ENCODE measurements at regions of chr1 and their contacts with region 1.

Region 1: DNA sequence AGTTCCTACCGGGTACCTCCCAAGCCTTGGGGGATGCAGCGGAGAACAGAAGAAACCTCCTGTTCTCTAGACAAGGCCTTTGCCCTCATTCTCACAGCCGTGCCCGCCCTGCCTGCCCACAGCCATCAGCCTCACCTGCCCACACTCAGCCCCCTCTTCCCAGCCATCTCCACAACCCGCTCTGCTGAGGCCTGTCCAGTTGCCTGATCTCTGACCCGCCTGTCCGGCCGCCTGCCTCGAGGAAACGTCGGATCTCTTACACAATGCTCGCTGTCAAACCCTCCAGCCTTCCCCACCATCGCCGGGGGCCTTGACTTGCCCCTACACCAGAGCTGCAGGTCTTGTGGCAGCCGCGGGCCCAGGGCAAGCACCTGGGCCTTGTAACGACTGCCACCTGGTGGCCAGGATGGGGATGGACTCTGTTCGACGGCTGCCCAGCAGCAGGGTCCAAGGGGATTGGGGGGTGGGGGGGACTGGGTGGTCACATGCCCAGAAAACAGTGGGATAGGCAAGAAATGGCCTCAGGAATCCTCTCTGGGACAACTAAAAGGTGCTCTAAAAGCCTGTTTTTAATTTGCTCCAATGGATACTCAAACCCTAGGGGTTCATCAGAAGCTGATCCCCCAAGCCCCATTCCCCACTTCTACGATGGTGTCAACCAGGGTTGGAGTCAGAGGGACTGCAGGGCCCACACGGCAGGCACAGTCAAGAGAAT is 31.0 kb downstream of the SLC45A1 start:
- DNase-seq: peak; percentile 63 to 77 (median 68)
- ATAC-seq: peak; percentile 69 to 78 (median 74)
- H3K4me3 ChIP-seq: no peak overlapping the region
- H3K27ac ChIP-seq: no peak overlapping the region
- H3K4me1 ChIP-seq: no peaks in the 10 kb centered on the region
- H3K27me3 ChIP-seq: no peaks in the 10 kb centered on the region
- CTCF ChIP-seq: peak; percentile 74 to 78 (median 75)
- POLR2A ChIP-seq: no peak

Region 2: DNA sequence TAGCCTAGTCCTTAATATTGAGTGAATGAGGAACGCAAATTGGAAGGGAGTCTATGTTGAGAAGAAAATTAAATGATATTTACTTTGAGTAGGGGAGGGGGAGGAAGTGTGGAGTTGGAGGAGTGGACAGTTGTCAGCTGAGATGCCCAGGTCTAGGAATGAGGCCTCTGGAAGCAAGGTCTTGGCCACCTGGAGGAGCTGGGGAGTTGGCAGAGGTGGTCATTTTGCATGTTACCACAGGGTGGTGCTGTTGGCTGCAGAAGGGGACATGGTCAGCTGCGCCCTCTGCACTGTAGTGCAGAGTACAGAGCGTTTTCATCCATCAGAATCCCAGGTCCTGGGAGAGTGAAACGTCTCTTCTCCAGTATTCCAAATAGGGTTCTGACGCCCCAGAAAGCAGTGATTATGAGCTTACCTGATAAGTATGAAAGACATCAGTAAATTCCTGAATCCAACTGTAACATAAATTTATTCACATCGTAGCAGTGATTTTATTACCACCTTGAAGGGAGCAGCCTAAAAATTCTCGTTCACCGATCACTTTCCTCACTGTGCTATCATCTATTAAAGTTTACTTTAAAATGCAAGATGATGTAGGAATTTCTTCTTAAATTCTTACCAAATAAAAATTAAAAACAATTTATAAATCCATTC is 373.6 kb before region 1 on chr1:
- intact Hi-C with region 1: loop called (anchors 5 to 10 kb)
- DNase-seq: peak; percentile 68 to 80 (median 76)
- ATAC-seq: peak; percentile 99 to 100 (median 100)
- H3K4me3 ChIP-seq: no peak overlapping the region
- H3K27ac ChIP-seq: no peak overlapping the region
- H3K4me1 ChIP-seq: peaks cover 0 to 14% (median 1%) of the 10 kb centered on the region in 4 donors
- H3K27me3 ChIP-seq: no peaks in the 10 kb centered on the region
- CTCF ChIP-seq: peak; percentile 87 to 93 (median 90)
- POLR2A ChIP-seq: no peak

Region 3: GRCh38 chr1:7983086-7983778 is 365.7 kb before region 1 on chr1:
- intact Hi-C with region 1: loop called (anchors 5 to 10 kb)
- DNase-seq: peak; percentile 39 to 71 (median 61)
- ATAC-seq: peak; percentile 57 to 81 (median 74)
- H3K4me3 ChIP-seq: no peak overlapping the region
- H3K27ac ChIP-seq: peak overlapping the region in 1 of 3 donors; percentile 18
- H3K4me1 ChIP-seq: peaks cover 0 to 27% (median 2%) of the 10 kb centered on the region in 4 donors
- H3K27me3 ChIP-seq: no peaks in the 10 kb centered on the region
- CTCF ChIP-seq: no peak
- POLR2A ChIP-seq: no peak

Region 4: GRCh38 chr1:8077120-8077573 is 271.8 kb before region 1 on chr1:
- intact Hi-C with region 1: no loop called
- DNase-seq: peak in 1 of 3 donors; percentile 33
- ATAC-seq: peak; percentile 66 to 92 (median 72)
- H3K4me3 ChIP-seq: no peak overlapping the region
- H3K27ac ChIP-seq: no peak overlapping the region
- H3K4me1 ChIP-seq: peaks cover 0 to 3% (median 0%) of the 10 kb centered on the region in 4 donors
- H3K27me3 ChIP-seq: no peaks in the 10 kb centered on the region
- CTCF ChIP-seq: no peak
- POLR2A ChIP-seq: no peak

Region 5: DNA sequence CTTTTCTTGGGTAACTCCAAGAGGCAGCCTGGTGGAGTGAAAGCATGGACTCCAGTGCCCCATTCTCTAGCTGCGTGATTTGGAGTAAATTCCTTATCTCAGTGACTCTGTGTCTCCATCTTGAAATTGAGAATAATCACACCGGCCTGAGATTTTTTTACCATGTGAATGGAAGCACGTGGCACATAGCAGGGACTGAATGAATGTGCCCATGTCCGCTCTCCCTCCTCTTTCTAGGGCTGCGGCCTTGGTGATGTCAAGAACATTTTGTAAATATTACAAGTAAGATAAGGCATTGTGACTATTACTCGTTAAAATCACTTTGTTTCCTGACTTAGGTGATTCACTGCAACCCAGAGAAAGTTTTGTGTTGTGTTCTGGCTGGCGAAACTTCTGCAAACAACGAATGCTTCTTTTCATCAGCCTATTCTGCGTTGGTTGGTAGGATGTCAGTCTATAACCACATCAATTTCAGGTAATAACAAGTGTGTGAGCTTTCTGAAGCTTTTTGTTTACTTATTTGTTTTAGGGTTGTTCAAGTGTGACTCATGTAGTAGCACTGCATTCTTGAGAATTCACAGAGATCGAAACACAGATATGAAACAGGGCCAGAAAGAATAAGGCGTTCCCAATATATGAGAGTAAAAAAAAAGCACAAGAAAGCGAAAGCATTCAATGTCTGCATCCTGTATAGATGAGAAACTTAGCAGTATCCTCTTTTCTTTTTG is 166.7 kb before region 1 on chr1:
- intact Hi-C with region 1: no loop called
- DNase-seq: no peak
- ATAC-seq: peak; percentile 45 to 49 (median 48)
- H3K4me3 ChIP-seq: no peak overlapping the region
- H3K27ac ChIP-seq: no peak overlapping the region
- H3K4me1 ChIP-seq: peaks cover 0 to 3% (median 0%) of the 10 kb centered on the region in 4 donors
- H3K27me3 ChIP-seq: no peaks in the 10 kb centered on the region
- CTCF ChIP-seq: no peak
- POLR2A ChIP-seq: no peak

Region 6: GRCh38 chr1:9289090-9289534 is 940.2 kb after region 1 on chr1:
- intact Hi-C with region 1: no loop called
- DNase-seq: peak in 2 of 3 donors; percentile 69 to 73
- ATAC-seq: peak in 2 of 4 donors; percentile 5 to 24
- H3K4me3 ChIP-seq: no peak overlapping the region
- H3K27ac ChIP-seq: peak overlapping the region in 1 of 3 donors; percentile 21
- H3K4me1 ChIP-seq: peaks cover 0 to 31% (median 6%) of the 10 kb centered on the region in 4 donors
- H3K27me3 ChIP-seq: no peaks in the 10 kb centered on the region
- CTCF ChIP-seq: peak; percentile 82 to 98 (median 92)
- POLR2A ChIP-seq: no peak

Measured in right lobe of liver (tissue), 6 donors.